ENCODE measurements at regions of chr18 and their contacts with region 1.

Region 1: GRCh38 chr18:27298214-27298804 is 113.2 kb upstream of the CHST9 start:
- DNase-seq: no peak
- ATAC-seq: no peak
- H3K4me3 ChIP-seq: no peak overlapping the region
- H3K27ac ChIP-seq: no peak overlapping the region
- H3K4me1 ChIP-seq: no peaks in the 10 kb centered on the region
- H3K27me3 ChIP-seq: no peaks in the 10 kb centered on the region
- CTCF ChIP-seq: peak; percentile 18

Region 2: GRCh38 chr18:27017901-27018500 is 280.3 kb before region 1 on chr18:
- intact Hi-C with region 1: loop called (anchors 5 to 10 kb)
- DNase-seq: no peak
- ATAC-seq: peak in 2 of 4 donors; percentile 39 to 70
- H3K4me3 ChIP-seq: no peak overlapping the region
- H3K27ac ChIP-seq: no peak overlapping the region
- H3K4me1 ChIP-seq: no peaks in the 10 kb centered on the region
- H3K27me3 ChIP-seq: no peaks in the 10 kb centered on the region
- CTCF ChIP-seq: peak; percentile 59

Region 3: DNA sequence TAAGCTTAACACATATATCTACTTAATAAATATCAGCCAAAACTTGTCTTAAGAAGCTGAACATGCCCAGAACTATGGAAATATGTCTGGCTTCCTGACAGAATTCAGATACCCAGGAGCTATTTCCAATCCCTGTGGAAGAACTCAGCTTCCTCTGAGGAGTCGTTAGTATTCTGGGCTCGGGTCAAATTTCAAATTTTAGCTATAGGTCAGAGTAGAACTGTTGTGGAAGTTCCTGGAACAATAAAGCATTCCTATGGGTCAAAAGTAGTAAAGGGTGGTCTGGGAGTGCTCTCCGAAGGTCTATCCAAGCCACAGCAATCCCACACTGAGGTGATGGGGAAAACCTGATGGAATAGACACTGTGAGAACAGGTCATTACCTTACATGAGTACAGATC is 229.5 kb after region 1 on chr18:
- intact Hi-C with region 1: no loop called
- DNase-seq: no peak
- ATAC-seq: no peak
- H3K4me3 ChIP-seq: no peak overlapping the region
- H3K27ac ChIP-seq: no peak overlapping the region
- H3K4me1 ChIP-seq: peaks cover 3% of the 10 kb centered on the region
- H3K27me3 ChIP-seq: no peaks in the 10 kb centered on the region
- CTCF ChIP-seq: no peak

Region 4: DNA sequence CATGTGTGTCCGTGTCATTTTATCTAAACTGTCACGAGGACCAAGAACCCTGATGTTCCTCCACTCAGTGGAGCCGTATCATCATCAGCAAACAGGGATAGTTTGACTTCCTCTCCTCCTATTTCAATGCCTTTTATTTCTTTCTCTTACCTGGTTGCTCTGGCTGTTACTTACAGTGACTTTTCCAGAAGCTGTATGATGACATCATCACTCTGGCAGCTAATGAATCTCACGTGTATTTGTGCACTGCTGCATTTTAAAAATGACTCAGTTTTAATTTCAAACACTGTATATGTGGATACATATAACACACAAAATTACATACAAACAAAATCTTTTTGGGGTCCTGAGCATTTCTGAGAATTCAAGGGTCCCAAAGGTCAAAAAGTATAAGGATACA is 397.2 kb after region 1 on chr18:
- intact Hi-C with region 1: no loop called
- DNase-seq: no peak
- ATAC-seq: no peak
- H3K4me3 ChIP-seq: no peak overlapping the region
- H3K27ac ChIP-seq: no peak overlapping the region
- H3K4me1 ChIP-seq: no peaks in the 10 kb centered on the region
- H3K27me3 ChIP-seq: no peaks in the 10 kb centered on the region
- CTCF ChIP-seq: no peak

Measured in psoas muscle (tissue), 8 donors.